OCI-LY7 (cell line): ENCODE measurements at regions of chr12 and their contacts with region 1.

Region 1: GRCh38 chr12:98644711-98645402 is at the starts of genes APAF1 and IKBIP:
- DNase-seq: peak; percentile 97
- H3K4me3 ChIP-seq: peak within 1 kb of the TSS; percentile 93
- H3K27ac ChIP-seq: peak within 1 kb of the TSS; percentile 87
- H3K4me1 ChIP-seq: peaks cover 31% of the 10 kb centered on the region
- CTCF ChIP-seq: no peak
- total RNA-seq, gene APAF1: 14.7 and 16.0 TPM in 2 replicates
- total RNA-seq, gene IKBIP: 18.3 and 25.1 TPM in 2 replicates

Region 2: DNA sequence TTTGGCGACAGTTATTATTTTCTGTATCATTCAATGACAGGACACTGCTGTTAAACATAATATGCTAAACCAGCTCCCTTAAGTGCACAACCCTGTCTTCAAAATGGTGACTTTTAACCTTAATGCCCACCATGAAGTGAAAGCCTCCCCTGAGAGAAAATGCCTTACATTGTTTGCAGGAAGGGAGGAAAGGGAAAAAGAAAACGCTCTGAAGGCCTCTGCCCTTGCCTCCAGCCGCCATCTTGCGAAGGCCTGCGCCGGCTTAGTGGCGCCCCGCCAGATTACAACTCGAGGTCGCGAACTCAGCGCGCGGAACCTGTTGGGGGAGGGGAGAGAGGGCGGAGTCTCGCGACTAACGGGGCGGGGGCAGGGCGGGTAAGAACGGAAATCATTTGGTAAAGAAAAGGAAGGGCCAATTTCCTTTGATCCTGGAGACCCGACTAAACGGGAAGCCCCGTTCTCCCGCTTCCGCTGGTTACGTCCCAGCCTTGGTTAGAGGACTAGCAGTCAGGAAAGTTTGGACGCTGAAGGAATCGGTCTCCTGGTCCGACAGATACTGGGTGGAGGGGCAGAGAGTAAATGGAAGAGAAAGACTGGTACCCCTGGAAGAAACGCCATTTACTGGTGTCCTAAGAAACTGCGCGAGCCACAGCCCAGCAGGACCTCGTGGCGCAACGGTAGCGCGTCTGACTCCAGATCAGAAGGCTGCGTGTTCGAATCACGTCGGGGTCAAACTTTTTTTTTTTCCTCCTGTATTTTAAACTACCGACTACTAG is 141.1 kb before region 1 on chr12:
- CTCF ChIA-PET with region 1: no interaction called
- POLR2A ChIA-PET with region 1: no interaction called
- intact Hi-C with region 1: loop called (anchors 1 kb)
- DNase-seq: peak; percentile 96
- H3K4me3 ChIP-seq: peak overlapping the region; percentile 69
- H3K27ac ChIP-seq: peak overlapping the region; percentile 95
- H3K4me1 ChIP-seq: peaks cover 17% of the 10 kb centered on the region
- CTCF ChIP-seq: 0 out of 2 replicates have a peak, but pooled peaks have one; percentile 20

Region 3: DNA sequence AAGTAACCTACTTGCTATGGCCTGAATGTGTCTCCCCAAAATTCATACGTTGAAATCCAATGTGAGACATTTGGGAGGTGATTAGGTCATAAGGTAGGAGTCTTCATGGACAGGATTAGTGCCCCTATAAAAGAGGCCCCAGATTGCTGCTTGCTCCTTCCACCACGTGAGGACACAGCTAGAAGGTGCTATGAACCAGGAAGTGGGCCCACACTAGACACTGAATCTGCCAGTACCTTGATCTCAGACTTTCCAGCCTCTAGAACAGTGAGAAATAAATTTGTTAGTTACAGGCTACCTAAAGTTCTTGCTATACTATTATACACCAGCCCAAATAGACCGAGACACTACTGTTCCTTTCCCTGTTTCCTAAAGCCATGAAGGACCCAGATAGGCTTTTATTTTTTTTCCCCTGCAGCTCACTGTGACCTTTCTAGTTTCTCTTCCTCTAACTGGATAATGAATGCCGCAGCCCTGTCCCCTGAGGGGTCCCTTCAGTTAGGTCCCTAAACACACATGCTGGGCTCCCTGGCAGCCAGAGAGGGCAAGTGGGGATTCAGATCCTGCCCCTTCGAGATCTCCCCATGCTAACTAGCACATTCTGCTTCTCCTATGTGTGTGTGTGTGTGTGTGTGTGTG is 32.0 kb before region 1 on chr12:
- CTCF ChIA-PET with region 1: no interaction called
- POLR2A ChIA-PET with region 1: interaction called, 8 read pairs
- intact Hi-C with region 1: loop called (anchors 2 kb)
- DNase-seq: peak; percentile 77
- H3K4me3 ChIP-seq: peak overlapping the region; percentile 5
- H3K27ac ChIP-seq: peak overlapping the region; percentile 53
- H3K4me1 ChIP-seq: peaks cover 16% of the 10 kb centered on the region
- CTCF ChIP-seq: peak; percentile 42; the same call in 1 of the 2 replicates